ENCODE measurements at regions of chr14 and their contacts with region 1.

Region 1: DNA sequence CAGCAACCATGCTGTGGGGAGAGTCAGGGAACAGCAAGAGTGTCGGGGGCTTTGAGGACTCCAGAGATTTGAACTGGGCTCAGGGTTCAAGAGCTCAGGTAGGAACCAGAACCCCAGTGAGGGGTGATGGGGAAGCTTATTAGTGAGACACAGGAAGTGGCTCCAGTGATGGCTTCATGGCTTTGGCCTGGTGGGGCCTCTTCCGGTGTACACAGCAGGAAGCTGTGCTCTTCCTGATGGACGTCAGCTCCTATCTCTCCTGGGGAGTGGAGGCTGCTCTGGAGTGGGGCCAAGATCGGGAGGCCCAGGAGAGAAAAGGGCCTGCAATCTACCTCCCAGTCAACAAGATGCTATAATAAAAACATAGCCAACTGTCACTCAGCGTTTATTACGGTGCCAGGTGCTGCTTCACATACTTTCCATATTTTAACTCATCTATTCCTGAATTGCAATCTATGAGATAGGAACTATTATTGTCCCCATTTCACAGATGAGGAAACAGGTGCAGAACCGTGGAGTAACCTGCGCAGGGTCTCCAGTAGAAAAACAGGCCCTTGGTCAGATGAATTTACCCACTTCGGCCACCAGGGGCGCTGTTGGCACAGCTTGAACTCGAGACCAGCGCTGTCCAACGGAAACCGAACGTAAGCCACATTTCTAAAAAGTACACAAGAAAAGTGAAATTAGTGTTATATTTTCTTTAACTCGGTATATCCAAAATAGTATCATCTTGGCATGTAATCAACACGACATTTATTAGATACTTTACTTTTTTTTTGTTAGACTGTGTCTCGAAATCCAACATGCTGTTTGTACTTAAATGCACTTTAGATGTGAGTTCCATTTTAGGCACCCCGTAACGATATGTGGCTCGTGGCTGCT is 63.6 kb upstream of the DLK1 start:
- DNase-seq: peak; percentile 69 to 87
- ATAC-seq: peak; percentile 69
- H3K4me3 ChIP-seq: no peak overlapping the region
- H3K27ac ChIP-seq: no peak overlapping the region
- H3K4me1 ChIP-seq: no peaks in the 10 kb centered on the region
- H3K27me3 ChIP-seq: no peaks in the 10 kb centered on the region

Region 2: GRCh38 chr14:101628471-101628966 is 965.4 kb after region 1 on chr14:
- intact Hi-C with region 1: loop called (anchors 10 kb)
- DNase-seq: peak; percentile 82 to 90
- ATAC-seq: peak; percentile 94
- H3K4me3 ChIP-seq: no peak overlapping the region
- H3K27ac ChIP-seq: no peak overlapping the region
- H3K4me1 ChIP-seq: no peaks in the 10 kb centered on the region
- H3K27me3 ChIP-seq: no peaks in the 10 kb centered on the region